Activated T-helper 2 cell treated with anti-CD3 and anti-CD28 coated beads, Interferon-gamma antibody, Interleukin-2, Interleukin-4, amounts not matched to agents 10 μg/mL and 5 μg/mL and 100 μg/mL, durations not matched to agents 14 hours and 24 hours and 36 hours (primary cell): ENCODE measurements at regions of chr20 and their contacts with region 1.

Region 1: GRCh38 chr20:53547664-53548239 is 45.9 kb downstream of the ZNF217 start:
- DNase-seq: peak; percentile 12
- H3K4me3 Mint-ChIP-seq: no peak overlapping the region
- H3K27ac Mint-ChIP-seq: no peak overlapping the region
- H3K4me1 Mint-ChIP-seq: peaks cover 3% of the 10 kb centered on the region
- H3K27me3 Mint-ChIP-seq: no peaks in the 10 kb centered on the region

Region 2: DNA sequence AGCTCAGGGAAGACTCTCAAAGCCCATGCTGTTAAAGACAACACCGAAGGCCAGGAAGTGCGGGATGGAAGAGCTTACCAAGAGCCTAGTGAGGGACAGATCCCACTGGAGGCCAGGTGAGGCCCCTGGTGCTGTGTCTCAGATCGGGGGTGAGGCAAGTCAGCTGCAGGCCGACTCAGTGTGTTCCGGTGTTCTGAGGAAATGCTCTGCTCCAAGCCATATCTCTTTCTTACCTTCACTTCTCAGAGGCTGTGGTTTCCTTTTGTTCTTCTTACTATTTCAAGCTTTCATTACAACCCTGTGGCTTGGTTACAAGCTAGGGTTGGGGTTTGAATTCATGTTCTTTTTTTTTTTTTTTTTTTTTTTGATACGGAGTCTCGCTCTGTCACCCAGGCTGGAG is 1241.9 kb before region 1 on chr20:
- intact Hi-C with region 1: loop called (anchors 10 kb)
- DNase-seq: peak; percentile 27
- H3K4me3 Mint-ChIP-seq: no peak overlapping the region
- H3K27ac Mint-ChIP-seq: peak overlapping the region; percentile 65
- H3K4me1 Mint-ChIP-seq: peaks cover 41% of the 10 kb centered on the region
- H3K27me3 Mint-ChIP-seq: no peaks in the 10 kb centered on the region

Region 3: DNA sequence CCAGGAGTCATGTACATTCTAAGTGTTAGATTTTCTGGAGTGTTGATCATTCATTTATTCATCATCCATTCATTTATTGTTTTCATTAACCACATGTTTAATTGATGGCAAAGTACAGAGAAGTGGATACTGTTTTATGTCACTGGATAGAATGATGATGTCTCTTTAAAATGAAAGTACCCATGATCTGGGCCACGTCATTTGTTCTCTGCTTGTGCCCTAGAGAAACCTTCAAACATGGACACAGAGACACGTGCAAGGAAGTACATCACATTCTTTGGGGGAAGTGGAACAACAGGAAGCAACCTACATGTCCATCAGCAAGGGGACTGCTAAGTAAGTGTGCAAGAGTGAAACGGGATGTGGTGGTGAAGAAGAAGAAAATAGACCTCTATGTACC is 651.4 kb before region 1 on chr20:
- intact Hi-C with region 1: no loop called
- DNase-seq: no peak
- H3K4me3 Mint-ChIP-seq: no peak overlapping the region
- H3K27ac Mint-ChIP-seq: no peak overlapping the region
- H3K4me1 Mint-ChIP-seq: no peaks in the 10 kb centered on the region
- H3K27me3 Mint-ChIP-seq: peaks cover 4% of the 10 kb centered on the region

Region 4: DNA sequence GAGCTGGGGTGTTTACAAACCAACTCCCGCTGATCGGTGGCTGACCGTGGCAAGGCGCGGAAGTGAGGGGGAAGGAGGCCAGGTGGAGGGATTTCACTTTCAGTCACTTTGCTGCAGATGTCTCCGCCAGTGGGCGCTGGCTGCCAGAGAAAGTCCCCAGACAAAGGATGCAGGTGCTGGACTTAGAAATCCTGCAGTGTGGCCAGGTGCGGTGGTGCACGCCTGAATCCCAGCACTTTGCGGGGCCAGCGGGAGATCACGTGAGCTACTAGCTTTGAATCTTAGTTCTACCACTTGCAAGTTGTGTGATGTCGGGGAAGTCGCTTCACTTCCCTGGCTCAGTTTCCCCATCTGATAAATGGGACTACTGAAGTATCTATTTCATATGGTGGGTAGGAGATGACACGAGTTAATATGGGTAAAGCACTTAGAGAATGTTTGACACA is 134.5 kb before region 1 on chr20:
- intact Hi-C with region 1: loop called (anchors 2 kb)
- DNase-seq: peak; percentile 41
- H3K4me3 Mint-ChIP-seq: no peak overlapping the region
- H3K27ac Mint-ChIP-seq: no peak overlapping the region
- H3K4me1 Mint-ChIP-seq: peaks cover 4% of the 10 kb centered on the region
- H3K27me3 Mint-ChIP-seq: no peaks in the 10 kb centered on the region

Region 5: DNA sequence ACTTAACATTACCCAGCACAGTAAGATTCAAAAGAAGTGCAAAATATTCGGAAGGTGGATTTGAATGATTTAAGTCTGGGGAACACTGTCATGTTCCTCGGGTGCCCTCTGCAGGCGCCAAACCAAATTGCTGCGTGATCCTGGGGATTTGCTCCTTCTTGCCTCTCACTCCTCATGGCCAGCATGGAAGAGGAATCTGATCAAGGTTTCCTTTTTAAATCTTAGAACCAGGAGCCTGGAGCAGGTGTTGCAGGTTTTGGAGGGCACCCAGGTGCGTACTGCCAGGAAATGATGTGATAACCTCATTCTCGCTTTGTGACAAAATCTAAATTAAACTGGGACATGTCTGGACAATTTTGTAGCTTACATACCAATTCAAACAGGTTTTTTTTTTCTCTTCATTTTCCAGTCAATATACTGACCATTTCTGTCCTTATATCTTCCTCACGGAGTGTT is 652.0 kb after region 1 on chr20:
- intact Hi-C with region 1: no loop called
- DNase-seq: peak; percentile 48
- H3K4me3 Mint-ChIP-seq: no peak overlapping the region
- H3K27ac Mint-ChIP-seq: no peak overlapping the region
- H3K4me1 Mint-ChIP-seq: no peaks in the 10 kb centered on the region
- H3K27me3 Mint-ChIP-seq: peaks cover 5% of the 10 kb centered on the region